ENCODE measurements at regions of chr6 and their contacts with region 1.

Region 1: GRCh38 chr6:37499433-37500293 is at the start of gene CCDC167:
- DNase-seq: peak; percentile 99
- H3K4me3 Mint-ChIP-seq: peak within 1 kb of the TSS; percentile 92
- H3K27ac Mint-ChIP-seq: peak within 1 kb of the TSS; percentile 95
- H3K4me1 Mint-ChIP-seq: peaks cover 86% of the 10 kb centered on the region
- H3K27me3 Mint-ChIP-seq: no peaks in the 10 kb centered on the region
- total RNA-seq, gene CCDC167: 60.4 to 65.2 TPM

Region 2: DNA sequence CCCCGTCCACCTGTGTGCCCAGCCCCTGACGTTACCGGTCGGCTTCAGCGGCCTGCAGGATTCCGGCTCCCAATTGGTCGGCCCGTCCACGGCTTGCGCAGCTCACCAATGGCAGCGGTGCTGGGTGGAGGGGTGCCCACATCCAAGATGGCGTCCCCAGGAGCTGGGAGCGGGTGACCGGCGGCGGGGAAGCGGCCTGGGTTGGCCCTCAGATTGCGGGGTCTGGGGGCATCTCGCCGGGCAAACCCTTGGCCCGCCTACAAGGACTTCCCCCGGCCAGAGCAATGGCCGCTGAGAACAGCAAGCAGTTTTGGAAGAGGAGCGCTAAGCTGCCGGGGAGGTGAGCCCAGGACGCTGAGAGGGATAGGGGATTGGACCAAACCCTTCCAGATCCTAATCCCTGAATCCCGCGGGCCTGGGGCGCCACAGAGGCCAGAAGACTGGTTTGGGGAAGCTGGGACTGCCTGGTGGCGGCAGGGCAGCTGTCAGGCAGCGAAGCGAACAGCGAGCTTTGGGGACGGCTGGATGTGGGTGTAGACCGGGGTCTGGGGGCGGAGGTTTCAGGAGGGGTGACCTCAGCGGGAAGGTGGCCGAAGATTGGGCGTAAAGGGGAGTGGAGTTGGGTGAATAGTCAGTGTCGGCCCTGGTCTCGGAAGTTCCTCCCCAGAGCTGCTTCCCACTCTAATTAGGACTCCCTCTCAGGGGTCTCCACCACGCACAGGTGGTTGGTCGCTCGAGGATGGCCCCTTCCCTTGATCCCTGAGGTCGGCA is 241.8 kb before region 1 on chr6 and contains the starts of genes TBC1D22B and TMEM217:
- CTCF ChIA-PET with region 1: no interaction called
- POLR2A ChIA-PET with region 1: no interaction called
- intact Hi-C with region 1: loop called (anchors 5 kb)
- DNase-seq: peak; percentile 98
- H3K4me3 Mint-ChIP-seq: peak within 1 kb of the TSS; percentile 86
- H3K27ac Mint-ChIP-seq: peak within 1 kb of the TSS; percentile 87
- H3K4me1 Mint-ChIP-seq: peaks cover 46% of the 10 kb centered on the region
- H3K27me3 Mint-ChIP-seq: no peaks in the 10 kb centered on the region
- total RNA-seq, gene TBC1D22B: 14.4 to 15.7 TPM
- total RNA-seq, gene TMEM217: 2.2 to 3.3 TPM

Region 3: GRCh38 chr6:37339741-37340638 is 159.7 kb before region 1 on chr6:
- CTCF ChIA-PET with region 1: no interaction called
- POLR2A ChIA-PET with region 1: no interaction called
- intact Hi-C with region 1: no loop called
- DNase-seq: no peak
- H3K4me3 Mint-ChIP-seq: no peak overlapping the region
- H3K27ac Mint-ChIP-seq: no peak overlapping the region
- H3K4me1 Mint-ChIP-seq: no peaks in the 10 kb centered on the region
- H3K27me3 Mint-ChIP-seq: peaks cover 9% of the 10 kb centered on the region

Region 4: GRCh38 chr6:37432916-37433656 is 66.6 kb before region 1 on chr6 and contains the start of gene CMTR1:
- CTCF ChIA-PET with region 1: no interaction called
- POLR2A ChIA-PET with region 1: interaction called, 4 read pairs
- intact Hi-C with region 1: loop called (anchors 5 kb)
- DNase-seq: peak; percentile 98
- H3K4me3 Mint-ChIP-seq: peak within 1 kb of the TSS; percentile 91
- H3K27ac Mint-ChIP-seq: peak within 1 kb of the TSS; percentile 98
- H3K4me1 Mint-ChIP-seq: peaks cover 44% of the 10 kb centered on the region
- H3K27me3 Mint-ChIP-seq: peaks cover 2% of the 10 kb centered on the region
- total RNA-seq, gene CMTR1: 69.2 to 70.1 TPM

Region 5: DNA sequence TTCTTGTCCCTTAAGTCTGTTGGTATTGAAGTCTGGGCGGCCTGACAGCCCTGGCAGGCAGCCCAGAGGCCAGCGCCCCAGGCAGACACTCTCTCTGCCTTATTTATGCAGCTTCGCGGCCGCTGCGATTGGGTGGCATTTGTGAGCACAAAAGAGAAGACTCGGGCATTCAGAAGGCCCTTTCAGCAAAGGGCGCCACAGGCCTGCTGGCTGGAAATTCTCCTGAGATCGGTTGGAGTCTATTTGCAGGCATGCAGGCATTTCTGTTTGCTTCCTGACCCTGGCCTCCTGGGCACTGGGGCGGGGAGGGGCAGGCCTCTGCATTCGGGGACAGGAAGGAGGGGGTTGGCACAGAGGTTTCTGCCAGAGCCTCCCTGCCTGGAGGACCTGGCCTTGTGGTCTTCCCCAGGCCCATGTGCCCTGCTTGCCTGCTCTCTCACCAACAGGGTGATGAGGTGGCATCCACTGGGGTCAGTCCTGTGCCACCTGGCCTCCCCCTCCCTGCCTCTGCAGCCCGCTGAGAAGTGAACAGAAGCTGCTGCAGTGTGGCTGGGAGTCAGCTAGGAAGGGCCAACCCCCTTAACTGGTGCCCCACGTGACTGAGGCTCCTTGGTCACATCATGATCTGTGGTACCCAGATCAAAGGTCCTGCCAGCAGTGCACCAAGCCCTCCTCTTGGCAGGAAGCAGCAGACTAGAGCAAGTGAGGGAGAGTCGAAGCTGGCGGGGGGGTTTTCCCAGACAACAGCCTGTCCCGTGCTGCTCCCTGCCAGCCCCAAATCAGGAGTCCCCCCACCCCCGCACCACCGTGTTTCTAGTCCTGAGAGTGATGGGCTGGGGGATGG is 16.6 kb after region 1 on chr6:
- CTCF ChIA-PET with region 1: interaction called, 53 read pairs
- POLR2A ChIA-PET with region 1: interaction called, 93 read pairs
- intact Hi-C with region 1: loop called (anchors 1 kb)
- DNase-seq: peak; percentile 96
- H3K4me3 Mint-ChIP-seq: peak overlapping the region; percentile 78
- H3K27ac Mint-ChIP-seq: peak overlapping the region; percentile 95
- H3K4me1 Mint-ChIP-seq: peaks cover 82% of the 10 kb centered on the region
- H3K27me3 Mint-ChIP-seq: no peaks in the 10 kb centered on the region

Region 6: DNA sequence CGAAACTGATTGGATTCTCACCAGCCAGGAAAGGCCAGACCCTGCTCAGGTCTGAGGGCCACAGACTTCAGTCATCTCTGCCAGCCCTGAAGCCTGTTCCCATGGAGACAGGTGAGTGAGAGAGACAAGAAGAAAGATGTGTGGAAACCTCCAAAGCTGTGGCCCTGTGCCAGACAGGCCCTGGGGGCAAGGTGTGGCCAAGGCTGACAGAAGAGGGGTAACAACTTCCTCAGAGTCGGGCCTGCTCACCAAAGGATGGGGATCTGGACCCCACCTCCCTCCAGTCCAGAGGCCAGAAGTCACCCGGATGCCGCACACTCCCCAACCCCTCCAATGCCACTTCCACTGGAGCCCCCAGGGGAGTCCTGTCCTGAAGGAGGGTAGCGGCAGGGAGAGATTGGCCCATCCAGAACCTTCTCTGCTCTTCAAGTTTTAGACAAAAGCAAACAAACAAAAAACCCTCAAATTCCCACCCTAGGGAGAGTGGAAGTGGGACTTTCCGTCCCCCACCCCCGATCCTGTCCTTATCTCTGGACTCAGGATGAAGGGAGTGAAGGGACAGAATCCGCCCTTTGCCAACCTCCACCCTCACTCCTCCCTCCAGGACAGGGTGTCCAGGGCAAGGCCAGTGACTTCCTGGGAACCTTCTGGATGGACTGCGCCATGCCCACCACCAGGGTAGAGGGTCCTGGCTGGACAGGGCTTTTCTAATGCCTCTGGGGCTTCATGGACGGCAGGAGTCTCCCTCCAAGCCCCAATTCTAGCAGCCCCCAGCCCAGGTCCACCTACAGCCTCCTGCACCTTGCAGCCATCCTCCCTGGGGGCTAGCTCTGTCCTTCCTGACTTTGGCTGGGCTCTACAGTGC is 124.7 kb after region 1 on chr6:
- CTCF ChIA-PET with region 1: no interaction called
- POLR2A ChIA-PET with region 1: no interaction called
- intact Hi-C with region 1: loop called (anchors 1 kb)
- DNase-seq: no peak
- H3K4me3 Mint-ChIP-seq: no peak overlapping the region
- H3K27ac Mint-ChIP-seq: no peak overlapping the region
- H3K4me1 Mint-ChIP-seq: peaks cover 32% of the 10 kb centered on the region
- H3K27me3 Mint-ChIP-seq: peaks cover 8% of the 10 kb centered on the region

Region 7: GRCh38 chr6:37698261-37699137 is 198.8 kb after region 1 on chr6:
- CTCF ChIA-PET with region 1: no interaction called
- POLR2A ChIA-PET with region 1: no interaction called
- intact Hi-C with region 1: loop called (anchors 5 kb)
- DNase-seq: peak; percentile 72
- H3K4me3 Mint-ChIP-seq: peak overlapping the region; percentile 95
- H3K27ac Mint-ChIP-seq: peak overlapping the region; percentile 87
- H3K4me1 Mint-ChIP-seq: peaks cover 21% of the 10 kb centered on the region
- H3K27me3 Mint-ChIP-seq: peaks cover 12% of the 10 kb centered on the region

Region 8: GRCh38 chr6:37860226-37860839 is 360.7 kb after region 1 on chr6:
- CTCF ChIA-PET with region 1: no interaction called
- POLR2A ChIA-PET with region 1: no interaction called
- intact Hi-C with region 1: loop called (anchors 5 kb)
- DNase-seq: no peak
- H3K4me3 Mint-ChIP-seq: no peak overlapping the region
- H3K27ac Mint-ChIP-seq: no peak overlapping the region
- H3K4me1 Mint-ChIP-seq: peaks cover 73% of the 10 kb centered on the region
- H3K27me3 Mint-ChIP-seq: no peaks in the 10 kb centered on the region

Measured in activated CD4-positive, alpha-beta memory T cell treated with anti-CD3 and anti-CD28 coated beads for 36 hours (primary cell).